ENCODE measurements at regions of chr2 and their contacts with region 1.

Region 1: DNA sequence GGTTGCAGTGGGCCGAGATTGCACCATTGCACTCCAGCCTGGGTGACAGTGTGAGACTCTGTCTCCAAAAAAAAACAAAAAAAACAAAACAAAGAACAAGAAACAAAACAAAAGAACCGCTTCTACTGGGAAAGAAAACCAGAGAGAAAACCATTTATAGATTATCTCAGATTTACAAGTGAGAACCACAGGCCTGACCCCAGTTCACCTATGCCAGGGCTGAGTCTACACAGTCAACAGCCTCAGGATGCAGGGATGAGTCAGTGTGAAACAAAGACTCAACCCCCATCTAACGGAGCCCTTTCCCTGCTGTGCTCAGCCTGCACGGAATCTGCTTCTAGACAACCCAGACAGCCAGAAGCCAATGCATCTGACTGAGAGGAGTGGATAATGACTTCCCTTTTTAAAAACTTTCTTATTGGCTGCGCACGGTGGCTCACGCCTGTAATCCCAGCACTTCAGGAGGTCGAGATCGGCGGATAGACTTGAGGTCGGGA is 25.5 kb upstream of the YWHAQ start:
- DNase-seq: peak; percentile 88
- H3K4me3 Mint-ChIP-seq: peak overlapping the region; percentile 25
- H3K27ac Mint-ChIP-seq: peak overlapping the region; percentile 93
- H3K4me1 Mint-ChIP-seq: peaks cover 46% of the 10 kb centered on the region
- H3K27me3 Mint-ChIP-seq: peaks cover 16% of the 10 kb centered on the region

Region 2: GRCh38 chr2:9613291-9613690 is 43.0 kb before region 1 on chr2:
- intact Hi-C with region 1: loop called (anchors 1 kb)
- DNase-seq: no peak
- H3K4me3 Mint-ChIP-seq: no peak overlapping the region
- H3K27ac Mint-ChIP-seq: no peak overlapping the region
- H3K4me1 Mint-ChIP-seq: peaks cover 77% of the 10 kb centered on the region
- H3K27me3 Mint-ChIP-seq: no peaks in the 10 kb centered on the region

Region 3: GRCh38 chr2:9686061-9686460 is 29.7 kb after region 1 on chr2:
- intact Hi-C with region 1: no loop called
- DNase-seq: no peak
- H3K4me3 Mint-ChIP-seq: no peak overlapping the region
- H3K27ac Mint-ChIP-seq: no peak overlapping the region
- H3K4me1 Mint-ChIP-seq: peaks cover 12% of the 10 kb centered on the region
- H3K27me3 Mint-ChIP-seq: peaks cover 7% of the 10 kb centered on the region

Region 4: GRCh38 chr2:9697909-9698308 is 41.6 kb after region 1 on chr2:
- intact Hi-C with region 1: loop called (anchors 1 kb)
- DNase-seq: peak; percentile 67
- H3K4me3 Mint-ChIP-seq: peak overlapping the region; percentile 27
- H3K27ac Mint-ChIP-seq: peak overlapping the region; percentile 27
- H3K4me1 Mint-ChIP-seq: peaks cover 31% of the 10 kb centered on the region
- H3K27me3 Mint-ChIP-seq: peaks cover 2% of the 10 kb centered on the region

Region 5: GRCh38 chr2:9708683-9709538 is 52.6 kb after region 1 on chr2:
- intact Hi-C with region 1: loop called (anchors 1 kb)
- DNase-seq: no peak
- H3K4me3 Mint-ChIP-seq: peak overlapping the region; percentile 17
- H3K27ac Mint-ChIP-seq: peak overlapping the region; percentile 91
- H3K4me1 Mint-ChIP-seq: peaks cover 51% of the 10 kb centered on the region
- H3K27me3 Mint-ChIP-seq: no peaks in the 10 kb centered on the region

Region 6: GRCh38 chr2:9782197-9782719 is 125.9 kb after region 1 on chr2:
- intact Hi-C with region 1: loop called (anchors 1 kb)
- DNase-seq: peak; percentile 94
- H3K4me3 Mint-ChIP-seq: peak overlapping the region; percentile 46
- H3K27ac Mint-ChIP-seq: peak overlapping the region; percentile 98
- H3K4me1 Mint-ChIP-seq: peaks cover 52% of the 10 kb centered on the region
- H3K27me3 Mint-ChIP-seq: no peaks in the 10 kb centered on the region

Measured in activated CD4-positive, alpha-beta T cell treated with anti-CD3 and anti-CD28 coated beads, Interleukin-2, amount 10 ng/mL, durations not matched to agents 24 days and 14 days (primary cell).